ENCODE measurements at regions of chr21 and their contacts with region 1.

Region 1: DNA sequence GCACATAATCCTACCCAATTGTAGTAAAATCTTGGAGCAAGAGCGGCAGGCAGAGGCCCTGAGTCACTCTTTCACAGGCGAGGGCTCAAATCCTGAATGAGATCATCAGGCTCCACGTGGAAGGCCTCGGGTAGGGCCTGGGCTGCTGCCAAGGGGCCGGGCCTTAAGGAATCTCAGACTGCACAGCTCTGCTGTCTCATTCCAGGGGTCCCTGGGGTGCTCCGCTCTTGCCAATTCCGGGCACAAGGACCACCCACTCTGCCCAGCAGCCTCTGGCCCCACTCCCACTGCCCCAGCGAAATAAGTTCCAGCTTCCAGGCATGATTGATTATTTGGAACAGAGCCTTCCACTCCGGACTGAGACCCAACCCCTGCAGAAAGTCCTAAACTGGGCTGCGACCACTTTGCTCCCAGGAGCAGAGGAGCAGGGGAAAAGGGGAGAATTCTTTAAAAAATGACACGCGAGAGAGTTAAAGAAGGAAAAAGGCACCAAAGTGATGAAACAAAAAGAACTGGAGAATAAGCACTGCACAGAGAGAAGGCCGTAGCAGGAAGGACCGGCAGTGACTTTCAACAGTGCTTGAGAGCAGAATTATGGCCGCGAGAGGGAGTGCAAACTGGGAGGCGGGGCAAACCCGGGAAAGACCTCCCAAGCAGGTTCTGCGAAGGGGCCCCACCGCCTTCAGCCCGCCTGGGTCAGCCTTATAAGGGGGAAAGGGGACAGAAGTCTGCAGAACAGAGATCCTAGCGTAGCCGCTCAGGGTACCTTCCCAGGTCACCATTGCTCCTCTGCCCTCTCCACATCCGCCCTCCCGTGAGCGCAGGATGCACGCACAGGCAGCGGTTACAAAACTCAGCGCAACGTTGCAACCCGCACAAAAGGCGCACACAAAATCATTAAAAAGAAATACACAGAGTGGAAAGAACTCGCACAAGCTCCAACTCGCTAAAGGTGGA is 2.0 kb downstream of the ADAMTS1 start:
- DNase-seq: peak; percentile 91
- H3K4me3 ChIP-seq: peak overlapping the region; percentile 52
- H3K27ac ChIP-seq: peak overlapping the region; percentile 80
- H3K4me1 ChIP-seq: peaks cover 15% of the 10 kb centered on the region
- H3K27me3 ChIP-seq: peaks cover 37% of the 10 kb centered on the region
- CTCF ChIP-seq: no peak

Region 2: GRCh38 chr21:26412885-26413284 is 430.4 kb before region 1 on chr21:
- intact Hi-C with region 1: no loop called
- DNase-seq: no peak
- H3K4me3 ChIP-seq: no peak overlapping the region
- H3K27ac ChIP-seq: no peak overlapping the region
- H3K4me1 ChIP-seq: no peaks in the 10 kb centered on the region
- H3K27me3 ChIP-seq: no peaks in the 10 kb centered on the region
- CTCF ChIP-seq: no peak

Region 3: DNA sequence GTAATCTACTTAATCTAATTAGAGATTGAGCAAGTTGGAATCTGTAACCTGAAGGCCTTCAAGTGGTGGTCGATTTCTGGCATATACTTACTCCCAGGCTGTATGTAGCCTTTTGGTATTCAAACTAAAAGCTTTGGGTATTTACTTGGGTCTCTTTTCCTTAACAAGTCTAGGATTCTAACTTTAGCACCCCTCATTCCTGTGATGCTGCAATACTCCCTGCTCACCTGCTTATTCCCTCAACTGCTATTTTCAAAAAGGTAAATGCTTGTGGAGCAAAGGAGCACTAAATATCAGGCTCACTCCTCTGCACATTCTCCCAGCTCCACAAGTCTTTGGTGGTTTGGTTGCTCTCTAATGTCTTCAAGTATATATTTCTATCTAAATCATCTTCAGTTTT is 202.2 kb before region 1 on chr21:
- intact Hi-C with region 1: no loop called
- DNase-seq: no peak
- H3K4me3 ChIP-seq: no peak overlapping the region
- H3K27ac ChIP-seq: no peak overlapping the region
- H3K4me1 ChIP-seq: no peaks in the 10 kb centered on the region
- H3K27me3 ChIP-seq: no peaks in the 10 kb centered on the region
- CTCF ChIP-seq: no peak

Region 4: DNA sequence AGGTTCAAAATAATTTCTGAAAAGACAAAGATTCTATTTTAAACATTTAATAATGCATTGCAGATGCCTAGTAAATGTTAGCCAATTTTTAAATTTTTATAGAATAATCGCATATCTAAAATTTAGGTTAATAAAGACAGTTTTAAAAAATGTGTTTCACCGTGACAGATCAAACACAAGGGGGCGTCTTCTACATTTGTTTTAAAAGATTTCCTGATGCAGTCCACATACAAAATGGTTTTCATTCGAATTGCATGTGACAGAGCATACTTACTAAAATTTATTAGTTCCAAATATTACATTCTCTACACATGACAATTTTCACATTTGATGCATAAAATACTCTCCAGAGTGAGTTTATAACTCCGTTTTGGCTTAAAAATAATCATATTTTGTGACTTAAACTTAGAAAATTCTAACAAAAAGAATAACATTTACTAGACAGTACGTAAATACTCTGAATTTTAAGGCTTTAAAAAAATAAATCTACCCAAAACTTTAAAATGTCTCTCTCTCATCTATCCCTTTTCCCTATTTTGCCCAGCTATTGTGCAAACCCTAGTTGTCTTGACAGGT is 73.6 kb before region 1 on chr21:
- intact Hi-C with region 1: loop called (anchors 5 kb)
- DNase-seq: no peak
- H3K4me3 ChIP-seq: no peak overlapping the region
- H3K27ac ChIP-seq: no peak overlapping the region
- H3K4me1 ChIP-seq: no peaks in the 10 kb centered on the region
- H3K27me3 ChIP-seq: no peaks in the 10 kb centered on the region
- CTCF ChIP-seq: peak; percentile 35

Region 5: DNA sequence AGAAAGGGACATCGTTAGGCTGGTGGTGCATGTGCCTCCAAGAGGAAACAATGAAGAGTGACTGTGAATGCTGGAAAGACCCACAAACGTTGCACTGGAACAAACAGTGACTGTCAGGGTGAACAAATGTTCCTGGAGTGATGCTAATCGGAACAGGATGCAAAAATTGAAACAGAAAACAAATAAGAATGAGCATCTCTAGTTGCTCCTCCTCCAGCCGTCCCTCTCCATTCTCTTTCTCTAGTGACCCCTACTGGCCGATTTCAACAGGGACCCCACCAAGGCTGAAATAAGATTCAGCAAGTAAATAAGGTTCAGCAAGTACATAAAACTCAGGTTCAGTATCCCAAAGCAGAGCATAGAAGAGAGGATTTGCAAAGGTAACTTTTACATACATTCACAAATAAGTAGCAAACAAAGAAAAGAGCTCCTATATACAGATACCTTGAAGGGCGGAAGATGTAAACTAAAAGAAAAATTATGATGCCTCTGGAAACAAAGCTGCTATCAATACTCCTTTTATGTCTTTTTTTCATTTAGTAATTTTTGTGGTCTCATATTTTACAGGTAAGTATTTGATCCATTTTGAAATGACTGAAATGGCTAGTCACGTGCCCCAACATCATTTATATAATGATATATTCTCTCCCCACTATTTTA is 959.7 kb after region 1 on chr21:
- intact Hi-C with region 1: loop called (anchors 10 kb)
- DNase-seq: peak; percentile 53
- H3K4me3 ChIP-seq: no peak overlapping the region
- H3K27ac ChIP-seq: no peak overlapping the region
- H3K4me1 ChIP-seq: no peaks in the 10 kb centered on the region
- H3K27me3 ChIP-seq: no peaks in the 10 kb centered on the region
- CTCF ChIP-seq: peak; percentile 49

Region 6: DNA sequence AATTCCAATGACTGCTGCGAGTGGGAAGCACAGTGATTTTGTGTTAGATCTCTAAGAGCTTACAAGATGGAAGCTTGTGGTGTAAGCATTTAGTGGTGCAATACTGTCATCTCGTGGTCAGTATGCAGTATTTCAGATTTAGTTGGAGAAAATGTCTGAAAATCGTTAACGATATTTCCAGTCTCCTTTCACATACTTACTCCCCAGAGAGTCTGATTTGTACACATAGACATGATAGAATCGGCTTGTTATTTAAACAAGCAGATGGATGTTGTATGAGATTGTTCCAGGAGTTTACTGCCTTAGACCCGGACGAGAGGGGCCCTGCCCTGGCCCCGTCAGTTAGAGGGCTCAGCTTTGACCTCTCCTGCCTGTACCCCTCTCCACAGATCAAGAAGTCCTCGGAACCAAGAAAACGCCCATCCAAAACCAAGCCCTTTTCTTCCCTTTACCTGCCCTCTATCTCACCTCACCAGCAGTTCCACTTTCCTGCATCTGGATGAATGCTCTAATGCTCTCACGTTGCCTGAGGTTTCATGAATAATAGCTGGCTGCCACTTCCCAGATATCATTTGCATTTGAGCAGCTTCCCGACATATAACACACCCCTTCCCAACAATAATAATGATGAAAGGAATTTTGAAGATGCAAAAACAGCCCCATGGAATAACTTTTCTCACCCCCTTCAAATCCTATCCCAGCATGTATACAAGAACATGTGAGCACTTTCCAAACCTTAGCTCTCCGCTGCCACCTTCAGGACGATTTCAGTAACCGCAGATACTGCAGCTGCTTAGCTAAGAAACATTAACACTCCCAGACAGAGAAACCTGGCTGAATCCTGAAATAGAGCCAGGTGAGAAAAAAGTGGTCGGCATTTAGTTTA is 1902.1 kb after region 1 on chr21:
- intact Hi-C with region 1: loop called (anchors 5 kb)
- DNase-seq: peak; percentile 79
- H3K4me3 ChIP-seq: peak overlapping the region; percentile 47
- H3K27ac ChIP-seq: peak overlapping the region; percentile 47
- H3K4me1 ChIP-seq: no peaks in the 10 kb centered on the region
- H3K27me3 ChIP-seq: no peaks in the 10 kb centered on the region
- CTCF ChIP-seq: peak; percentile 81

Measured in colonic mucosa (tissue), 4 donors.